Common myeloid progenitor, CD34-positive (primary cell): ENCODE measurements at regions of chr16 and their contacts with region 1.

Region 1: GRCh38 chr16:57084257-57084770 is 8.1 kb upstream of the CPNE2 start:
- DNase-seq: peak; percentile 83 to 92 (median 87)
- H3K4me3 ChIP-seq: no peak overlapping the region
- H3K27ac ChIP-seq: no peak overlapping the region
- H3K4me1 ChIP-seq: peaks cover 3 to 8% (median 5%) of the 10 kb centered on the region in 4 experiments
- H3K27me3 ChIP-seq: no peaks in the 10 kb centered on the region

Region 2: DNA sequence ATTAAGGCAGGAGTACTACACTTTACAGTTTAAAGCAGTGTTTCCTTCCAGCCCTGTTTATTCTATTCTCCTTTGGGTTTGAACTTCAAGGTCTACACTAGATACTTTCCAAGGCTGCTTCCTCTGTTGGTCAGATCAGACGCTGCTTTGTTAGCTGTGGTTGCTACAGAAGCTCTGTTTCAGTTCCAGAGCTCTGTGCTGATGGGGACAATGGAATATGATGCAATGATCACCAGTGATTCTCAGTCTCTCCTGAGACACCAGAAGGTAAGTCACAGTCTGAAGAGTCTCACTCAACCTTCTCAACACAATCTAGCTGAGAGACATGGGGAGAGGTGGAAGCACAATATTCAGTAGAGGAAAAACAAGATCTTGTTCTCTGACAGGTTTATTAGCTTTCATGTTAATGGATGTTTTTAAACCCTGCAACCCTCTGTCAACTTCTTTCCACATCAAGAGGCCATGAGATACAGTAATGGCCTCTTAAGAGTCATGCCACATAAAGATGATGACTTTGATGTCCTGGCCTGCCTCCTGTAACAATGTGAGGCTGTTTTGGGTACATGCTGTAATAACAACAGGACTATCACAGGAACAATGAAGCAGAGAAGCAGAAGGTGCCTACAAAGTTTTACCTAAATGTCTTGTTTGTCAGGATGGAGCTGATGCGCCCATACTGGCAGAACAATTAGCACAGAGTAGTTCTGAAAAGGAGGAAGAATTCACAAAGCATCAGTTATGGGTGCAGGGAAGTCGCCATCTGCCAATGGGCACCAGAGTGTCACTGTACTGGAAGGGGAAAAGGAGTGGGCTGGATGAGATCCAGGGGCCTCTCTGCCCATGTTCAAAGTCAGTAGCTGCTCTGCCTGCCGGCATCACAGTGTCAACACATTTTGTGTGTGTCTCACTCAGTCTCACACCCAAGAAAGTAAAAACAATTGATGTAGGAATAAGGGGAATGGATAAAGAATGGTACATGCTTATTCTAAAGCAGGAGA is 68.1 kb after region 1 on chr16:
- CTCF ChIA-PET with region 1: interaction called, 11 read pairs
- POLR2A ChIA-PET with region 1: interaction called, 3 read pairs
- DNase-seq: no peak
- H3K4me3 ChIP-seq: no peak overlapping the region
- H3K27ac ChIP-seq: no peak overlapping the region
- H3K4me1 ChIP-seq: peaks cover 4 to 40% (median 23%) of the 10 kb centered on the region in 4 experiments
- H3K27me3 ChIP-seq: no peaks in the 10 kb centered on the region

Region 3: GRCh38 chr16:57167953-57168352 is 83.6 kb after region 1 on chr16:
- CTCF ChIA-PET with region 1: interaction called, 104 read pairs
- POLR2A ChIA-PET with region 1: no interaction called
- DNase-seq: peak; percentile 83 to 91 (median 90)
- H3K4me3 ChIP-seq: no peak overlapping the region
- H3K27ac ChIP-seq: no peak overlapping the region
- H3K4me1 ChIP-seq: peaks cover 0 to 8% (median 0%) of the 10 kb centered on the region in 4 experiments
- H3K27me3 ChIP-seq: no peaks in the 10 kb centered on the region